Naive thymus-derived CD4-positive, alpha-beta T cell (primary cell): ENCODE measurements at regions of chr20 and their contacts with region 1.

Region 1: DNA sequence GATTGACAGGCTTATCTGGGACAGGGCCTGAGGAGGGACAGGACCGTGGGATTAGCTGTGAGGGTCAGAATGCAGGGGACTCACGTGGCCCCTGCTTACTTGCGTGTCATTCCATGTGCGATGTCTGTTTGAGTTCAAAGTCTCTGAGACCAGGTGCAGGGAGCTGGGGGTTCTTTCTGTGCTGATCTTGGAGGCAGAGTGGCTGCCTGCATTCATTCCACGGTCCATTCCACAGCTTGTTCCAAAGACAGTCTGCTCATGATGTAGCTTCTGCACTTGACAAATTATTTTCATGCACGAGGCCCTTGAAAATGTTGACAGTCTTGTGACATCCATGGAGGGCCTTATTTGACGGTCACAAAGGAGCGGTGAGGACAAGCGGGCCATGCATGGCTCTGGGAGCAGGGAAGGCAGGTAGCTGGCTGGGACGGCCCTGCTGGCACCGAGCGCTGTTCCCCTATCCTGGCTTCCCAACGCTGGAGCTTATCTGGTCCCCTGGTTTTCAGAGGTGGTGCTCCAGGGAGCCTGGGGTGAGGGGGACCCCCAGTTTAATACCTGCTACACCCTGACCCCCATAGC is 156.3 kb upstream of the RNF24 start:
- DNase-seq: no peak
- ATAC-seq: no peak
- H3K4me3 ChIP-seq: peak overlapping the region; percentile 79
- H3K4me3 Mint-ChIP-seq: peak overlapping the region; percentile 35 to 84 (median 74)
- H3K27ac ChIP-seq: no peak overlapping the region
- H3K27ac Mint-ChIP-seq: peak overlapping the region; percentile 32 to 91 (median 78)
- H3K4me1 ChIP-seq: peaks cover 6 to 9% of the 10 kb centered on the region in 2 donors
- H3K4me1 Mint-ChIP-seq: peaks cover 8 to 49% (median 28%) of the 10 kb centered on the region in 7 donors
- H3K27me3 ChIP-seq: no peaks in the 10 kb centered on the region
- H3K27me3 Mint-ChIP-seq: no peaks in the 10 kb centered on the region

Region 2: GRCh38 chr20:4119854-4120209 is 51.8 kb before region 1 on chr20:
- CTCF ChIA-PET with region 1: no interaction called
- POLR2A ChIA-PET with region 1: no interaction called
- intact Hi-C with region 1: no loop called
- DNase-seq: no peak
- ATAC-seq: no peak
- H3K4me3 ChIP-seq: no peak overlapping the region
- H3K4me3 Mint-ChIP-seq: no peak overlapping the region
- H3K27ac ChIP-seq: no peak overlapping the region
- H3K27ac Mint-ChIP-seq: no peak overlapping the region
- H3K4me1 ChIP-seq: no peaks in the 10 kb centered on the region
- H3K4me1 Mint-ChIP-seq: peaks cover 0 to 30% (median 0%) of the 10 kb centered on the region in 7 donors
- H3K27me3 ChIP-seq: no peaks in the 10 kb centered on the region
- H3K27me3 Mint-ChIP-seq: peaks cover 21 to 51% (median 32%) of the 10 kb centered on the region in 5 donors

Region 3: GRCh38 chr20:4160761-4161305 is 10.8 kb before region 1 on chr20:
- CTCF ChIA-PET with region 1: no interaction called
- POLR2A ChIA-PET with region 1: no interaction called
- intact Hi-C with region 1: loop called in 1 of 2 experiments (anchors 1 kb)
- DNase-seq: peak in 1 of 9 donors; percentile 56
- ATAC-seq: peak; percentile 39
- H3K4me3 ChIP-seq: no peak overlapping the region
- H3K4me3 Mint-ChIP-seq: peak overlapping the region in 1 of 10 donors; percentile 19
- H3K27ac ChIP-seq: no peak overlapping the region
- H3K27ac Mint-ChIP-seq: peak overlapping the region in 2 of 9 donors; percentile 68 to 79
- H3K4me1 ChIP-seq: peaks cover 0 to 5% of the 10 kb centered on the region in 2 donors
- H3K4me1 Mint-ChIP-seq: peaks cover 0 to 47% (median 4%) of the 10 kb centered on the region in 7 donors
- H3K27me3 ChIP-seq: no peaks in the 10 kb centered on the region
- H3K27me3 Mint-ChIP-seq: peaks cover 0 to 6% (median 5%) of the 10 kb centered on the region in 5 donors